ENCODE measurements at regions of chr17 and their contacts with region 1.

Region 1: DNA sequence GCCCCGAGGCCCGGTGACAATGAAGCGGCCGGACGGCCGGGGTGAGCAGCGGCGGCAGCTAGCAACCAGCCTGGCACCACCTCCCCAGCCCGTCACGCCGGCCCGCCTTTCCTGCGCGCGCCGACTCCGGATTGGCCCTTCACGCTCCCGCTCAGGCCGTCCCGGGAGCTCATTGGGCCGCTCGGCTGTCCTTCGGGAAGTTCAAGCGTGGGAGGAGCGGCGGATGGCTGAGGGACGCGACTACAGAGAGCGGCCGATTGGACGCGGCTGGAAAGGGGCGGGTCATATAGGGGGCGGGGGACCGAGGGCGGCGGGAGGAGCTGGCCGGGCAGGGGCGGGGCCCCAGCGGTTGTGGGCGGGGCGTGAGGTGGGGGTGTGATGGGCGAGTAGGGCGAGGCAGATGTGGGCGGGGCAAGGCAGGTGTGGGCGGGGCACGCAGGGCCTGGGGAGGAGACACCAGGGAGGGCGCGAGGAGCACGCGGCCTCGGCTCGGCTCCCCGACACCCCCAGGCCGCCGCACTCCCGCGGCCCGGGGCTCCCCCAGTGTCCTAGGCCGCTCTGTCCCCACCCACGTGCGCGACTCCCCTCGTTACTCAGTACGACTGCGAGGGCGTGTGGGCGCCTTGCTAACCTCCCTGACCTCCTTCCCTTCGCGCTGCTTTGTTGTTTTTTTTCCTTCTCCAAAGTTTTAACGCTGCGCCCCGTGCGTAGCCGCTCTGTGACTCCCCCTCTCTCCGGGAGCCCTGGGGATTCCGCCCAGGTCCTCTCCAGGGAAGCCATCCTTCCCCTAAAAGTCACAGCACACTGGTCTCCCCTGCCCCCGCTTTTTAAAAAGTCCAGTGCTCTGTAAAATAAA is at the start of gene CEP131:
- DNase-seq: peak; percentile 99 to 100
- H3K4me3 ChIP-seq: peak within 1 kb of the TSS; percentile 95
- H3K4me3 Mint-ChIP-seq: peak within 1 kb of the TSS; percentile 80
- H3K27ac Mint-ChIP-seq: peak within 1 kb of the TSS; percentile 90
- H3K4me1 ChIP-seq: peaks cover 9% of the 10 kb centered on the region
- H3K4me1 Mint-ChIP-seq: no peaks in the 10 kb centered on the region
- H3K27me3 ChIP-seq: no peaks in the 10 kb centered on the region
- H3K27me3 Mint-ChIP-seq: no peaks in the 10 kb centered on the region
- CTCF ChIP-seq: no peak
- total RNA-seq, gene CEP131: 28.4 and 29.4 TPM in 2 replicates

Region 2: DNA sequence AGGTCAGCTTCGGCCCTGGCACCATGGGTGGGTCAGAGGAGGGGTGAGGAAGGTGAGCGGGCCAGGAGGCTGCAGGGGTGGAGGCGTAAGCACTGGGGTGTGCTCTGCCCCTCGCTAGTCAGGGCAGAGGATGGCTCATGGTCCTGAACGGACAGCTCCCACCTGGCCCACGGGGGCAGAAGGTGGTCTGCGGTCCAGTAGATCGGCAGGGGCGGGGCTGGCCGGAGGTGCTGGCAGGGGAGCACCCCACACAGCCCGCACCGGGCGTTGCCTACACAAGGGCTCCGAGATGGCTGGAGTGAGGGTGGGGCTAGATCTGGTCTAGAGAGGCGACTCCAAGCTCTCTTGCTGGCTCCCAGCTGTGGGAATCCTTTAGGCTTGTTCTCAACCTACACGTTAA is 754.9 kb before region 1 on chr17:
- CTCF ChIA-PET with region 1: no interaction called
- POLR2A ChIA-PET with region 1: no interaction called
- intact Hi-C with region 1: no loop called
- DNase-seq: peak in 1 of 2 experiments; percentile 47
- H3K4me3 ChIP-seq: no peak overlapping the region
- H3K4me3 Mint-ChIP-seq: no peak overlapping the region
- H3K27ac Mint-ChIP-seq: no peak overlapping the region
- H3K4me1 ChIP-seq: no peaks in the 10 kb centered on the region
- H3K4me1 Mint-ChIP-seq: no peaks in the 10 kb centered on the region
- H3K27me3 ChIP-seq: no peaks in the 10 kb centered on the region; the same call in 1 of the 2 replicates
- H3K27me3 Mint-ChIP-seq: peaks cover 46% of the 10 kb centered on the region
- CTCF ChIP-seq: no peak

Region 3: DNA sequence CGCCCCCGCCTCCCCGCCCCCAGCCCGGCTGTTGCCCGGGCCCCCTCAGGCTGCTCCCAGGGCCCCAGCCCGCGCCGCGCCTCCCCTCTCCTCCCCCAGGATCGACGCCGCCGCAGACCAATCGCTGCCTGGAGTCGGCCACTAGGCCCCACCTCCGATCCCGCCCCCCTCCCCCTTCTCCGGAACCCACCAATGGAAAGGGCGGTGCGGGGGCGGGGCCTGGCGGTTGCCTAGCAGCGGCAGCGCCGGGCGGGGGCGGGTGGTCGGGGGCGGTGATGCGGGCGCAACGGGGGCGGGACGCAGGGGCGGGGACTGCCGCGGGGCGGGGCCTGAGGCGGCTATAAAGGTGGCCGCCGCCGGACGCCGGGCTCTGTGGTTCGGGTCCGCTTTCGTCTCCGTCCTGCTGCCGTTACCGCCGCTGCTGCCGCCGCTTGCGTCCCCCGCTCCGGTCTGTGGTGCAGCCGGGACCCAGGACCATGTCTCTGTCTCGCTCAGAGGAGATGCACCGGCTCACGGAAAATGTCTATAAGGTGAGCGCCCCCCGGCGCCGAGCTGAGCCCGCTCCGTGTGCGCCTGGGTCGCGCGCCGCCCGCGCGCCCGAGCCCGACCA is 188.2 kb before region 1 on chr17 and contains the start of gene BAIAP2:
- CTCF ChIA-PET with region 1: no interaction called
- POLR2A ChIA-PET with region 1: no interaction called
- intact Hi-C with region 1: loop called (anchors 5 kb)
- DNase-seq: peak; percentile 97
- H3K4me3 ChIP-seq: peak within 1 kb of the TSS; percentile 82
- H3K4me3 Mint-ChIP-seq: peak within 1 kb of the TSS; percentile 79
- H3K27ac Mint-ChIP-seq: peak within 1 kb of the TSS; percentile 57
- H3K4me1 ChIP-seq: peaks cover 42% of the 10 kb centered on the region
- H3K4me1 Mint-ChIP-seq: peaks cover 46% of the 10 kb centered on the region
- H3K27me3 ChIP-seq: no peaks in the 10 kb centered on the region
- H3K27me3 Mint-ChIP-seq: no peaks in the 10 kb centered on the region
- CTCF ChIP-seq: no peak
- total RNA-seq, gene BAIAP2: 52.6 and 57.7 TPM in 2 replicates

Region 4: GRCh38 chr17:81132770-81133723 is 90.1 kb before region 1 on chr17:
- CTCF ChIA-PET with region 1: no interaction called
- POLR2A ChIA-PET with region 1: interaction called, 3 read pairs
- intact Hi-C with region 1: loop called (anchors 1 kb)
- DNase-seq: peak; percentile 83 to 96
- H3K4me3 ChIP-seq: peak overlapping the region; percentile 51
- H3K4me3 Mint-ChIP-seq: peak overlapping the region; percentile 72
- H3K27ac Mint-ChIP-seq: peak overlapping the region; percentile 88
- H3K4me1 ChIP-seq: peaks cover 55% of the 10 kb centered on the region
- H3K4me1 Mint-ChIP-seq: peaks cover 5% of the 10 kb centered on the region
- H3K27me3 ChIP-seq: no peaks in the 10 kb centered on the region
- H3K27me3 Mint-ChIP-seq: no peaks in the 10 kb centered on the region
- CTCF ChIP-seq: no peak

Region 5: GRCh38 chr17:81142301-81143199 is 80.6 kb before region 1 on chr17:
- CTCF ChIA-PET with region 1: interaction called, 12 read pairs
- POLR2A ChIA-PET with region 1: no interaction called
- intact Hi-C with region 1: no loop called
- DNase-seq: peak; percentile 88 to 90
- H3K4me3 ChIP-seq: no peak overlapping the region
- H3K4me3 Mint-ChIP-seq: no peak overlapping the region
- H3K27ac Mint-ChIP-seq: no peak overlapping the region
- H3K4me1 ChIP-seq: peaks cover 6% of the 10 kb centered on the region
- H3K4me1 Mint-ChIP-seq: no peaks in the 10 kb centered on the region
- H3K27me3 ChIP-seq: no peaks in the 10 kb centered on the region
- H3K27me3 Mint-ChIP-seq: no peaks in the 10 kb centered on the region
- CTCF ChIP-seq: peak; percentile 62 to 81

Region 6: GRCh38 chr17:81238817-81239600 is 15.9 kb after region 1 on chr17 and contains the starts of genes NDUFAF8 and TEPSIN:
- CTCF ChIA-PET with region 1: interaction called, 9 read pairs
- POLR2A ChIA-PET with region 1: interaction called, 34 read pairs
- intact Hi-C with region 1: loop called (anchors 1 kb)
- DNase-seq: peak; percentile 98 to 99
- H3K4me3 ChIP-seq: peak within 1 kb of the TSS; percentile 91
- H3K4me3 Mint-ChIP-seq: peak within 1 kb of the TSS; percentile 82
- H3K27ac Mint-ChIP-seq: peak within 1 kb of the TSS; percentile 71
- H3K4me1 ChIP-seq: peaks cover 27% of the 10 kb centered on the region
- H3K4me1 Mint-ChIP-seq: peaks cover 19% of the 10 kb centered on the region
- H3K27me3 ChIP-seq: no peaks in the 10 kb centered on the region
- H3K27me3 Mint-ChIP-seq: no peaks in the 10 kb centered on the region
- CTCF ChIP-seq: no peak
- total RNA-seq, gene NDUFAF8: 65.0 and 66.7 TPM in 2 replicates
- total RNA-seq, gene TEPSIN: 38.7 and 40.3 TPM in 2 replicates

Region 7: DNA sequence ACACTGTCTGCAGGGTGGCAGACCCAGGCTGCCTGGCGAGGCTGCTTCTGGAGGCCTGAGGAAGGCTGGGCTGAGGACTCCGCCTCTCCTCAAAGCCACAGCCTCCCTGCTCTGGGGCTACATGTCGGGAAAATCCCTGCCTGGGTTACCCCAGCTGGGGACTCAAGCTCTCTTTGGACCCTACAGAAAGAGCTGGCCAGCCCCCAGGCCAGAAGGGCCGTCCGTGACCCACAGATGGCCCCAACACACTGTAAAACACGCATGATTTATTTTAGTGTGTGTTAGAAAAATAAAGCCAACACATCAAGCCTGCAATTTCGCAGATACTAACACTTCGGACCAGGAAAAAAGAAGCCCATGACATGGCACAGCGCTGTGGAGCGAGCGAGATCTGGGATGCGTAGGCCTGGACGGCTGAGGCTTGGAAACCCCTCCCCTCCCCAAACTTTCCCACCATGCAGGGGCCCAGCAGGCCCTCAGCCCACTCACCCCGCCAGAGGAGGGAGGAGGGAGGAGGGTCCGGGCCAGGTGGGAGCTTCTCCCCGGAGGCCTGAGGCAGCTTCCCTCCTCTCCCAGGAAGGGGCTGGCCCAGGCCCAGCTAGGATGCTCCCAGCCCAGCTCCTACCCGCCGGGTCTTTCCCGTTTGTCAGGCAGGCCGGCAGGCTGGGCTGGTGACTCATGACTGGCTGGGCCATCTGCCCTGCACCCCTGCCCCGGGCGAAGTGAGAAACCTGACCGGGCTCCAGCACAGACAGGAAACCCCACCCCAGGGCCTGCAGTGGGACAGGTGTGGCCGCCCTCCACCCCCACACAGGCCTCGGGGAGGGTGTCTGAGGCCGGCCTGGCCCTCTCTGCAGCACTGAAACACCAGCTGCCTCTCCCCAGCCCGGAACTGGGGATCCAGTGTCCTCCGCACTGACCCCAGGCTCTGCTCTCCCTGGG is 106.1 kb after region 1 on chr17:
- CTCF ChIA-PET with region 1: no interaction called
- POLR2A ChIA-PET with region 1: no interaction called
- intact Hi-C with region 1: no loop called
- DNase-seq: peak; percentile 98
- H3K4me3 ChIP-seq: peak overlapping the region; percentile 29
- H3K4me3 Mint-ChIP-seq: peak overlapping the region; percentile 74
- H3K27ac Mint-ChIP-seq: peak overlapping the region; percentile 95
- H3K4me1 ChIP-seq: peaks cover 54% of the 10 kb centered on the region
- H3K4me1 Mint-ChIP-seq: peaks cover 27% of the 10 kb centered on the region
- H3K27me3 ChIP-seq: no peaks in the 10 kb centered on the region
- H3K27me3 Mint-ChIP-seq: no peaks in the 10 kb centered on the region
- CTCF ChIP-seq: no peak

Region 8: DNA sequence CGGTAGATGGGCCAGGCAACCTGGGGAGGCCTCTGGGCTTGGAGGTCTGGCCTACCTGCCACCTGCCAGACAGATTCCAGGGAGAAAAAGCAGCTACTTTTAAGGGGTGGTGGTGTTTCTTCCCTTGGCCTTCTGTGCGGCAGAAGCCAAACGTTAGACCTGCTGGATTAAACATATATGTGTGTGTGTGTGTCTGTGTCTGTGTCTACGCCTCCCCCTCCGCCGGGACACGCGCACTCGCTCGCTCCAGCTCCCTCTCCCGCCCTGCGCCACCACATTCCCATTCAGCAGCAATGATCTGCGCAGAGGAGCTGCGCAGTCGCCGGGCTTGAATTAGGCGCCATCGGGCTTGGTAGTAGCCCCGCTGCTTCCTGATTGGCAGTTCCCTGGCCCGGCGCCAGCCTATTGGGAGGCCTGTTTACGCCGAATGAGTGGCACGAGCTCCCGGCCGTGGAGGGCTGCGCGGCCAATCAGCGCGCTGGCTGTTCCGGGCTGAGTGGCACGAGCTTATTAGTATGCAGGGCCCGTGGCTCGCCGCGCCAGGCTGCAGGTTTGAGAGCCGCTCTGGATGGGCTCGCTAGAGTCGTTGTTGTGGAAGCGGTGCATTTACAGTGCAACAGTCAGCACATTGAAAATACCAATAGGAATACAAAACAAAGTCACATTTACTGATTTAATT is 171.9 kb after region 1 on chr17 and contains the start of gene BAHCC1:
- CTCF ChIA-PET with region 1: interaction called, 7 read pairs
- POLR2A ChIA-PET with region 1: interaction called, 6 read pairs
- intact Hi-C with region 1: loop called (anchors 1 kb)
- DNase-seq: peak; percentile 100
- H3K4me3 ChIP-seq: peak within 1 kb of the TSS; percentile 94
- H3K4me3 Mint-ChIP-seq: peak within 1 kb of the TSS; percentile 84
- H3K27ac Mint-ChIP-seq: peak within 1 kb of the TSS; percentile 98
- H3K4me1 ChIP-seq: peaks cover 12% of the 10 kb centered on the region
- H3K4me1 Mint-ChIP-seq: peaks cover 28% of the 10 kb centered on the region
- H3K27me3 ChIP-seq: no peaks in the 10 kb centered on the region
- H3K27me3 Mint-ChIP-seq: no peaks in the 10 kb centered on the region
- CTCF ChIP-seq: no peak
- total RNA-seq, gene BAHCC1: 10.2 and 15.5 TPM in 2 replicates

Measured in Caco-2 (cell line).